ENCODE measurements at regions of chr18 and their contacts with region 1.

Region 1: GRCh38 chr18:658001-658946 is 821 bp downstream of the TYMS start:
- DNase-seq: peak; percentile 85
- H3K4me3 Mint-ChIP-seq: peak overlapping the region; percentile 97
- H3K27ac Mint-ChIP-seq: peak overlapping the region; percentile 89
- H3K4me1 Mint-ChIP-seq: peaks cover 48% of the 10 kb centered on the region
- H3K27me3 Mint-ChIP-seq: no peaks in the 10 kb centered on the region

Region 2: DNA sequence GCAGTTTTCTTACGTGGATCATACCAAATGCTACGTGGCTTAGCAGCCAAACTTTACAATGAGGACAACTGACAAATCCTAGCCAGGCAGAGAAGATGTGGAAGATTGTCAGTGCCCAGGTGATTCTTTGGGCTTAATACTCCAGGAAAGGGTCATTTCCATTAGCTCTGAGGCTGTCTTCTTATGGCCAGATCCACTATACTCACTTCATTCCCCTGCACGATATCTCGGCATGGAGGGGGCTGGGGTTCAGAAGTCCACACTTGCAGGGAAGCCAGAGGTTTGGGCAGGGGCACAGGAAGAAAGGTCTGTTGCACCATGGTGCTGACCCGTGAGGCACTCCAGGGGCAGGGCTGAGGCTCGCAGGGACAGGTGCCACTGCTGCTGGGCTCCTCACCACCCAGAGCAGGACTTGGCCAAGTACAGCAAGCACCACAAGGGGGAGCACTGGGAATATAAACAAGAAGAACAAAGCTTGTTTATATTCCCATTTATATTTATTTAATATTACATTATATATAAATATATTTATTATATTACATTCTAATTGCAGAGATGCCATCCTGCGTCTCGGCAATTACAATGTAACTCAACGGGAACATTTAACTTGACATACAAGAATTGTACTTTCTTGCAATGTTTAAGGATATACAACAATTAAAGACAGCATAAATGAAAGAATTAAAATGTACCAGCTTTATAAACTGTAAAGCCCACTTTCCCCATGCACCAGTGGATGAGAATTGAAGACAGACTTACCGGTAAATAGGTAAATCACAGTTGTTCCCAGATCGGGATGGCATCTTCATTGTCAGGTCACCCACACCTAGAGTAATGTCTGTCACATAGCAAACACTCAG is 34.3 kb before region 1 on chr18:
- CTCF ChIA-PET with region 1: interaction called, 12 read pairs
- POLR2A ChIA-PET with region 1: interaction called, 3 read pairs
- DNase-seq: peak; percentile 69
- H3K4me3 Mint-ChIP-seq: no peak overlapping the region
- H3K27ac Mint-ChIP-seq: no peak overlapping the region
- H3K4me1 Mint-ChIP-seq: no peaks in the 10 kb centered on the region
- H3K27me3 Mint-ChIP-seq: peaks cover 37% of the 10 kb centered on the region

Region 3: DNA sequence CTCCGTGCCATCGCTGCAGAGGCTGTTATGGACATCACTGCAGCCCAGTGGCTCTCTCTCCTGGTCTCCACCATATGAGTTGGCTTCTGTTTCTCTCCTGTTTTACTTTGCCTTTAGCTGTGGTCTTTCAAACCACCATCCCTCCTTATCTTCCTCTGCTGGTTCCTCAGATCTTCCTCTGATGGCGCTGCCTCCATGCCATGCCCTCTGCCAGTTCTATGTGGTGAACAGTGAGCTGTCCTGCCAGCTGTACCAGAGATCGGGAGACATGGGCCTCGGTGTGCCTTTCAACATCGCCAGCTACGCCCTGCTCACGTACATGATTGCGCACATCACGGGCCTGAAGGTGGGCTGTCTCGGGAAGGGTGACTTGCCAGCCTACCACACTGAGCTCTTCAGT is 12.2 kb after region 1 on chr18:
- CTCF ChIA-PET with region 1: interaction called, 3 read pairs
- POLR2A ChIA-PET with region 1: interaction called, 144 read pairs
- DNase-seq: no peak
- H3K4me3 Mint-ChIP-seq: no peak overlapping the region
- H3K27ac Mint-ChIP-seq: peak overlapping the region; percentile 47
- H3K4me1 Mint-ChIP-seq: peaks cover 20% of the 10 kb centered on the region
- H3K27me3 Mint-ChIP-seq: no peaks in the 10 kb centered on the region

Region 4: GRCh38 chr18:703213-703967 is 45.1 kb after region 1 on chr18:
- CTCF ChIA-PET with region 1: no interaction called
- POLR2A ChIA-PET with region 1: interaction called, 32 read pairs
- DNase-seq: no peak
- H3K4me3 Mint-ChIP-seq: no peak overlapping the region
- H3K27ac Mint-ChIP-seq: peak overlapping the region; percentile 74
- H3K4me1 Mint-ChIP-seq: peaks cover 15% of the 10 kb centered on the region
- H3K27me3 Mint-ChIP-seq: no peaks in the 10 kb centered on the region

Region 5: DNA sequence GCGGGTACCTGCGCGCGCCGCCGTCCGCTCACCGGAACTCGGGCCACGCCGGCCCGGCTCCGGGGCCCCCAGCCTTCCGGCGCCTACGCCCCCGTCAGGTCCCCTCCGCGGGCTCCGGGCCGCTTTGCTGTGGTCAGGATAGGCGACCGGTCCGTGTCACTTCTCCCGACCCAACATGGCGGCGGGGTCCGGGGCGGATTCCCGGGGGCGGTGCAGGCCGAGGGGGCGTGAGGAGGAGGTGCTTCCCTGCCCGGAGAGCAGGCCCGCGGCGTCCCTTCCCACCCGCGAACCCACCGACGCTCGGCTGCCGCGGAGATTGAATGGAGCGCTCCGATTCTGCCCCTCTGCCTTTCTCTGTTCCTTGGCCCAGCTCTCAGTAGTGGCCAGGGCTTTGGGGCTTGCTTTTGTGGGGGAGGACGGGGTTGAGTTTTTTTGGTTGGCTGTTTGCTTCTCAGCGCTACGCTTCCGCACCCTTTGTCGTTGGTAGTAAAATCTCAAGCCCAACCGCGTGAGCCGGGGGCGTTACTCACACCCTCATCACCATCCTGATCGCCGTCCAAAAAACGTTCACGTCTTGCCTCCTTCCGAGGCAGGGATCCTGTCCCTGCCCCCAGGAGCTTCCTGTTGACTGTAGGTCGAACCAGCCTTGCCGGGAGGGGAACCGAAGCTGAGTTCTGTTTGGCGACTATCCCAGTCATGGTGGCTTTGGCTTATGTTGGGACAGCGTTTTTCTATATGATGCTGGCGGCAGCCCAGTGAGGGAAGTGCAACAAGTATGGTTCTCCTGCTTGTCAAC is 154.3 kb after region 1 on chr18:
- CTCF ChIA-PET with region 1: interaction called, 3 read pairs
- POLR2A ChIA-PET with region 1: interaction called, 43 read pairs
- DNase-seq: peak; percentile 83
- H3K4me3 Mint-ChIP-seq: peak overlapping the region; percentile 83
- H3K27ac Mint-ChIP-seq: peak overlapping the region; percentile 99
- H3K4me1 Mint-ChIP-seq: peaks cover 72% of the 10 kb centered on the region
- H3K27me3 Mint-ChIP-seq: peaks cover 3% of the 10 kb centered on the region

Measured in activated CD4-positive, alpha-beta memory T cell treated with anti-CD3 and anti-CD28 coated beads, Interleukin-2, amount 10 ng/mL, durations not matched to agents 7 days and 5 days (primary cell).